Colonic mucosa (tissue), 4 donors: ENCODE measurements at regions of chr14 and their contacts with region 1.

Region 1: DNA sequence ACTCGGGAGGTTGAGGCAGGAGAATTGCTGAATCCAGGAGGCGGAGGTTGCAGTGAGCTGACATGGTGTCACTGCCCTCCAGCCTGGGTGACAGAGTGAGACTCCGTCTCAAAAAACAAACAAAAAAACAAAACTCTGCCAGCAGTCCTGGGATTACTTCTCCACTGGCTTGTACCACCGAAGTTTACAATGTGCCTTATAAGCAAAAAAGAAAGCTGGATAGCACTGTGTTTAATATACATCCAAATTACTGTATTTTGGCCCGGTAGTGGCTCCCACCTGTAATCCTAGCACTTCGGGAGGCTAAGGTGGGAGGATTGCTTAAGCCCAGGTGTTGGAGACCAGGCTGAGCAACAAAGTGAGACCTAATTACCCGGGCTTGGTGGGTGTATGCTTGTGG is 16.7 kb downstream of the HOMEZ start:
- DNase-seq: no peak
- H3K4me3 ChIP-seq: no peak overlapping the region
- H3K27ac ChIP-seq: no peak overlapping the region
- H3K4me1 ChIP-seq: no peaks in the 10 kb centered on the region
- H3K27me3 ChIP-seq: no peaks in the 10 kb centered on the region
- CTCF ChIP-seq: no peak

Region 2: DNA sequence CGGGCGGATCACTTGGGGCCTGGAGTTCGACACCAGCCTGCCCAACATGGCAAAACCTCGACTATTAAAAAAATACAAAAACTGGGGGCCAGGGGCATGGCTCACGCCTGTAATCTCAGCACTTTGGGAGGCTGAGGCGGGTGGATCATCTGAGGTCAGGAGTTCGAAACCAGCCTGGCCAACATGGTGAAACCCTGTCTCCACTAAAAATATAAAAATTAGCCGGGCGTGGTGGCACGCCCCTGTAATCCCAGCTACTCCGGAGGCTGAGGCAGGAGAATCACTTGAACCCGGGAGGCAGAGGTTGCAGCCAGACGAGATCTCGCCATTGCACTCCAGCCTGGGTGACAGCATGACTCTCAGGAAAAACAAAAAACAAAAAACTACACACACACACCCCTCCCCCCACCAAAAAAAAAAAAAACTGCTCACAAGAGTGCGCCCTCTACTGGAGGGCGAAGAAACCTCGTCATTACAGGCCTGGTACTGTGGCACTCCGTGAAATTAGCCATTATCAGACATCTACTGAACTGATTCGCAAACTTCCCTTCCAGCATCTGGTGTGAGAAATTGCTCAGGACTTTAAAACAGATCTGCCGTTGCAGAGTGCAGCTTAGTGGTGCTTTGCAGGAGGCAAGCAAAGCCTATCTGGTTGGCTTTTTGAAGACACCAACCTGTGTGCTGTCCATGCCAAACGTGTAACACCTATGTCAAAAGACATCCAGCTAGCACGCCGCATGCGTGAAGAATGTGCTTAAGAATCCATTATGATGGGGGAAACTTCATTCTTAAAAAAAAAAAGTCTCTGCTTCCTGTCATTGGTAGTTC is 25.8 kb after region 1 on chr14:
- intact Hi-C with region 1: loop called (anchors 2 kb)
- DNase-seq: peak; percentile 31
- H3K4me3 ChIP-seq: peak overlapping the region; percentile 9
- H3K27ac ChIP-seq: no peak overlapping the region
- H3K4me1 ChIP-seq: peaks cover 3% of the 10 kb centered on the region
- H3K27me3 ChIP-seq: no peaks in the 10 kb centered on the region
- CTCF ChIP-seq: peak; percentile 88

Region 3: DNA sequence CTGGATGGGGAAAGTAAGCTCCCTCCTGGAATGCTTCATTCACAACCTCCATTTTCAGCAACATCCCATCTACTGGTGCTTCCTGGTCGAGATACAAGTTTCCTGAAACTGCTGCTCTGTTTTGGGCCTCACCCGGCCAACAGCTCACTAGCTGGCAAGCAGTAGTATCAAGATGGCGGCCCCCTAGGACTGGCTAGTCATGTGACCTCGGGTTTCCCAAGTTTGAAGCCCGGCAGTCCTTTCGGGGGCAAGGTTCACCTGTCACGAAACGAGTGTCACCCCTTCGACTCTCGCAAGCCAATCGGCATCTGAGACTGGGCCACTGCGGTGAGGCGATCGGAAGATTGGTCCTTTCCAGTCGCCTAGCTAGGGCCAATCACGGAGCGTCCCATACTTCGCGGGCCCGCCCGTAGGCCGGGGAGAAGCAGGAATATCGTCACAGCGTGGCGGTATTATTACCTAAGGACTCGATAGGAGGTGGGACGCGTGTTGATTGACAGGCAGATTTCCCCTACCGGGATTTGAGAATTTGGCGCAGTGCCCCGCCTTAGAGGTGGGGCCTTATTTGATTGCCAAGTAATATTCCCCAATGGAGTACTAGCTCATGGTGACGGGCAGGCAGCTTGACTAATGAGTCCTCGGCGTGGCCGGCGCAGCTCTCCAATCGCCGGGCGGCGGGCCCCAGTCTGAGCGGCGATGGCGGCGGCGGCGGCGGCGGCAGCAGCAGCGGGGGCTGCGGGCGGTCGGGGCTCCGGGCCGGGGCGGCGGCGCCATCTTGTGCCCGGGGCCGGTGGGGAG is 51.8 kb after region 1 on chr14 and contains the start of gene PABPN1:
- intact Hi-C with region 1: loop called (anchors 10 kb)
- DNase-seq: peak; percentile 100
- H3K4me3 ChIP-seq: peak within 1 kb of the TSS; percentile 96
- H3K27ac ChIP-seq: peak within 1 kb of the TSS; percentile 93
- H3K4me1 ChIP-seq: no peaks in the 10 kb centered on the region
- H3K27me3 ChIP-seq: no peaks in the 10 kb centered on the region
- CTCF ChIP-seq: no peak
- total RNA-seq, gene PABPN1: 122 to 197 TPM

Region 4: GRCh38 chr14:23379366-23380196 is 110.4 kb after region 1 on chr14:
- intact Hi-C with region 1: loop called (anchors 5 kb)
- DNase-seq: peak; percentile 71
- H3K4me3 ChIP-seq: no peak overlapping the region
- H3K27ac ChIP-seq: no peak overlapping the region
- H3K4me1 ChIP-seq: no peaks in the 10 kb centered on the region
- H3K27me3 ChIP-seq: no peaks in the 10 kb centered on the region
- CTCF ChIP-seq: peak; percentile 95